ENCODE measurements at regions of chr20 and their contacts with region 1.

Region 1: GRCh38 chr20:57622579-57623377 is 2.6 kb upstream of the ZBP1 start:
- DNase-seq: peak; percentile 99
- H3K4me3 ChIP-seq: peak overlapping the region in 1 of 3 experiments; percentile 40
- H3K27ac ChIP-seq: no peak overlapping the region
- H3K4me1 ChIP-seq: peaks cover 29% of the 10 kb centered on the region
- H3K27me3 ChIP-seq: peaks cover 5% of the 10 kb centered on the region
- CTCF ChIP-seq: peak; percentile 98 to 99 (median 98)

Region 2: DNA sequence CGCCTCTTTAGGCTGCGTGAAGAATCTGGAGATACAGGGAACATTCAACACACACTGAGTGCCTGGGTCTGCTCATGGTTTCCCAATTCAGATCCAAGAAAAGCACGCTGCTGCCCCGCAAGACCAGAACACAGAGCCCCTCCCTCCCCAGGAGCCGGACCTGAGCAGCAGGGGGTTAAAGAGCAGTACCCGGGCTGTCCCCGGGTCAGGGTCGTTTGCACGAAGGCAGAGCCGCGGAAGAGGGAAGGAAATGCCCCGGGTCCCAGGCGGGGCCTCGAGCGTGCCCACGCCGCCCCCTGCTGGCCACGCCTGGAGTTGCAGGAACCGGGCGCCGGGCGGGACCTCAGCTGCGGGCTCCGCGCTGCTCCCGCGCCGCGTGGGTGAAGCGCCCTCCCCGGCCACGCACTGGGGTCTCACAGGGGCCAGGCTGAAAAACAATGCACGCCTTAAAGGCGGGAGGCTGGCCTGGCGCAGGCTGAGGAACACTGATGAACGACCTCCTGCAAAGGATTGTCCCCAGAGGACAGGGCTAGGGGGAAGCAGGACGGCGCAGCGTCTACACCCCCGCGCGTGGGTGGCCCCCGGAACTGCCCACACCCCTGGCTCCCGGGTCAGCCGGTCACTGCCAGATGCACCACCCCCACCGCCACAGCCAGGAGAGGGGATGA is 556.8 kb after region 1 on chr20:
- dilution Hi-C with region 1: loop called (anchors 25 kb)
- DNase-seq: no peak
- H3K4me3 ChIP-seq: no peak overlapping the region
- H3K27ac ChIP-seq: no peak overlapping the region
- H3K4me1 ChIP-seq: no peaks in the 10 kb centered on the region
- H3K27me3 ChIP-seq: peaks cover 64% of the 10 kb centered on the region
- CTCF ChIP-seq: peak; percentile 58 to 92 (median 90)